GM12878 (cell line): ENCODE measurements at regions of chr19 and their contacts with region 1.

Region 1: DNA sequence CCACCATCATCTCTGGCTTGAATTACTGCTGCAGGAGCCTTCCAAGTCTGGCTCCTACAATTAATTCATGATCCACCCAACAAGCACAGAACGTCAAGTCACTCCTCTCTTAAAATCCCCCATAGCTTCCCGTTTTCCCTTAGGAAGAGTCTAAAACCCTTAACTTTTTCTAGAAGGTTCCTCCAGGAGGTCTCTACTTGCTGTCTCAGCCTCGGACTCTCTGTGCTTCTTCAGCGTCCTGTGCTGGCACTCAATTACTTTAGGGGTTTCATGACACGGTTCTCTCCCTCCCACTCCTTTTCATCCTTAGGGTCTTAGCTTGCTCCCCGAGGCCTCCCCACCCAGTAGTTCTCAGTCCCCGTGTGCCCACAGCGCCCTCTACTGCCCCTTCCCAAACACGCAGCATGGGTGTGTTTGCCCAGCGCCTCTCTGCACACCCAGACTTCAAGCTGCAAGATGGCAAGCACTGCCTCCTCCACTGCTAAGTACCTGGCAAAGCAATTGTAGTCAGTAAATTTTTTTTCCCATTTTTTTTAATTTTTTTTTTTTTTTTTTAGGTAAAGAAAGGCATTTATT is 25.8 kb upstream of the MAP3K10 start:
- DNase-seq: no peak
- ATAC-seq: peak; percentile 90
- H3K4me3 ChIP-seq: no peak overlapping the region; the same call in 1 of the 2 replicates
- H3K27ac ChIP-seq: no peak overlapping the region
- H3K4me1 ChIP-seq: peaks cover 19% of the 10 kb centered on the region
- H3K27me3 ChIP-seq: no peaks in the 10 kb centered on the region
- CTCF ChIP-seq: peak; percentile 79 to 88 (median 84)
- EP300 ChIP-seq: no peak
- POLR2A ChIP-seq: no peak
- RAD21 ChIP-seq: peak; percentile 85

Region 2: DNA sequence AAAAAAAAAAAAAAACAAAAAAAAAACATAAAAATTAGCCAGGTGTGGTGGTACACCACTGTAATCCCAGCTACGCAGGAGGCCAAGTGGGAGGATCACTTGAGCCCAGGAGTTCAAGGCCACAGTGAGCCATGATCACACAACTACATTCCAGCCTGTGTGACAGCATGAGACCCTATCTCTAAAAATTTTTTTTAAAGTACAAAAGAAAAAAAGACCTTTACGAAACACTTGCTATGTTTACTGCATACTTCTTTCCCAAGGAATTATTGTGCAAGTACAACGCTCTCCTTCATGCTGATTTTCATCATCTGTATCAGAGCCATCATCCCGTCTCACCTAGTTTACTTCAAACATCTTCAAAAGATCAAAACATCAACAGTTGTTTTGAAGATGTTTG is 46.1 kb before region 1 on chr19:
- CTCF ChIA-PET with region 1: no interaction called
- POLR2A ChIA-PET with region 1: no interaction called
- RAD21 ChIA-PET with region 1: no interaction called
- SMC1A ChIA-PET with region 1: no interaction called
- in situ Hi-C with region 1: no loop called
- intact Hi-C with region 1: no loop called
- DNase-seq: no peak
- ATAC-seq: no peak
- H3K4me3 ChIP-seq: no peak overlapping the region
- H3K27ac ChIP-seq: no peak overlapping the region
- H3K4me1 ChIP-seq: no peaks in the 10 kb centered on the region
- H3K27me3 ChIP-seq: no peaks in the 10 kb centered on the region
- CTCF ChIP-seq: no peak
- EP300 ChIP-seq: no peak
- POLR2A ChIP-seq: no peak
- RAD21 ChIP-seq: no peak

Region 3: DNA sequence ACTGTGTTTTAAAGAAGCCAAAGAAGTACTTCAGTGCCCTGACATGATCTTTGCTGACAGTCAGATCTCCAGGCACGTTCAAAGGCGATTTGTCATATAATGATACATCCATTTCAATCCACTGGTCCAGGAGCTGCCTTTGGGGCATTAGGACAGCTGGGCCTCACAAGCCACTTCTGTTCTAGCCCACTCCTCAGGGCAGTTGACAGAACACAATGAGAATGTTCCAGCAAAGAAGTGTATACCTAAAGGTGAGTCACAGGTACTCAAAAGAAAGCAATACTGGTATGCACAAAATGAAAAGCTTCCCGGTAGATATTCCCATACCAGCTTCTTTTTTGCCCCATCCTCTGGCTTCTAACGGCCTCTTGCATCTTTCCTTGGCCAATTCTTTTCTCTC is 13.3 kb after region 1 on chr19:
- CTCF ChIA-PET with region 1: interaction called, 11 read pairs
- POLR2A ChIA-PET with region 1: no interaction called
- RAD21 ChIA-PET with region 1: no interaction called
- SMC1A ChIA-PET with region 1: interaction called, 6 read pairs
- in situ Hi-C with region 1: no loop called
- intact Hi-C with region 1: no loop called
- DNase-seq: no peak
- ATAC-seq: no peak
- H3K4me3 ChIP-seq: no peak overlapping the region
- H3K27ac ChIP-seq: no peak overlapping the region
- H3K4me1 ChIP-seq: no peaks in the 10 kb centered on the region
- H3K27me3 ChIP-seq: no peaks in the 10 kb centered on the region
- CTCF ChIP-seq: no peak
- EP300 ChIP-seq: no peak
- POLR2A ChIP-seq: no peak
- RAD21 ChIP-seq: no peak

Region 4: DNA sequence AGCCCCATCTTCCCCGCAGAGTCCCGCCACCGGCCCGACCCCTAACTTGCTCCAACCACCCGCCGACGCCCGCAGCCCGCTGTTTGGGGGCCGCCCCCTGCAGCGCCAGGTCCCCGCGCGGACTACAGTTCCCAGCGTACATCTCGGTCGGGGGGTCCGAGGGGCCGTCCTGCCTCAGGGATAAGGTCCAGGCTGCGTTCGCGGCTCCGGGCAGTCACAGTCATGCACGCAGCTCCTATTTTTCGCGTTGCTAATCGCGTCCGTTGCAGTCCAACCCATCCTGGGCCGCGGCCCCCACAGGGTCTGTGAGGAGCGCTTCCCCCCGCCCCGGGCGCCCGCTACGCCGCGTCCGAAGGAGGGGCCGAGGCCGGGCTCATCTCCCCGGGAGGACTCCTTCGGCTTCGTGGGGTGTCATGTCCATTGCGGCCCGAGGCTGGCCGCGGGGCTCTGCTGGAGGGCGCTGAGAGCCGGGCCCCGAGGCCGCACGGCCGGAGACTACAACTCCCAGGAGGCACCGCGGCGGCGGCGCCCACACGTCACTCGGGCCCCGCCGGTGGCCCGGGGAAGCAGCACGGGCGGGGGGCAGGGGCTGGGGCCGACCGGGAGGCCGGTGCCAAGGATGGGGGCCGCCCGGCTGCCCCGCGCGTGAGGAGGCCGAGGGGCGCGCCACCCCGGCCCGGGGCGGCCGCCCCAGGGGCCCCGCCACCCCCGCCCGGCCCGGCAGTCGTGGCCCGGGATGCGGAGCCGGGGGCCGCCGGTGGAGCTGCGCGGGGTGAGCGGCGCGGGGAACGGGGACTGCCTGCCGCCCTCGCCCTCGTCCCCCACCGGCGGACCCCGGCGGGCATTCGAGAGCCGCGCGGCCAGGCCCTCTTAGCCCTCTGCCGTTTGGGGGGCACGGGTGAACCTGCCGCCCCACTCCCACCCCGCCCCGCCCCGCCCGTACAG is 25.7 kb after region 1 on chr19 and contains the start of gene MAP3K10:
- CTCF ChIA-PET with region 1: interaction called, 24 read pairs
- POLR2A ChIA-PET with region 1: interaction called, 6 read pairs
- RAD21 ChIA-PET with region 1: interaction called, 16 read pairs
- SMC1A ChIA-PET with region 1: interaction called, 4 read pairs
- in situ Hi-C with region 1: no loop called
- intact Hi-C with region 1: no loop called
- DNase-seq: peak; percentile 12
- ATAC-seq: peak; percentile 93
- H3K4me3 ChIP-seq: peak within 1 kb of the TSS; percentile 97
- H3K27ac ChIP-seq: peak within 1 kb of the TSS; percentile 89
- H3K4me1 ChIP-seq: peaks cover 10% of the 10 kb centered on the region
- H3K27me3 ChIP-seq: no peaks in the 10 kb centered on the region
- CTCF ChIP-seq: no peak
- EP300 ChIP-seq: no peak
- POLR2A ChIP-seq: peak; percentile 75
- RAD21 ChIP-seq: no peak
- polyA plus RNA-seq, gene MAP3K10: 0.11 to 0.16 TPM